HCT116 (cell line): ENCODE measurements at regions of chr11 and their contacts with region 1.

Region 1: GRCh38 chr11:72040726-72041441 is 39.5 kb downstream of the NUMA1 start:
- DNase-seq: peak; percentile 72
- ATAC-seq: peak; percentile 67
- H3K4me3 ChIP-seq: peak overlapping the region; percentile 57 to 63
- H3K27ac ChIP-seq: peak overlapping the region; percentile 83
- H3K4me1 ChIP-seq: peaks cover 24 to 53% of the 10 kb centered on the region in 2 experiments
- H3K27me3 ChIP-seq: no peaks in the 10 kb centered on the region
- CTCF ChIP-seq: no peak; a peak in 1 of 6 replicates
- POLR2A ChIP-seq: no peak
- RAD21 ChIP-seq: no peak

Region 2: GRCh38 chr11:72072348-72072747 is 31.5 kb after region 1 on chr11:
- CTCF ChIA-PET with region 1: no interaction called
- POLR2A ChIA-PET with region 1: no interaction called
- RAD21 ChIA-PET with region 1: no interaction called
- intact Hi-C with region 1: loop called (anchors 5 kb)
- DNase-seq: peak; percentile 59
- ATAC-seq: peak; percentile 77
- H3K4me3 ChIP-seq: peak overlapping the region; percentile 13 to 36
- H3K27ac ChIP-seq: peak overlapping the region; percentile 76
- H3K4me1 ChIP-seq: peaks cover 48 to 65% of the 10 kb centered on the region in 2 experiments
- H3K27me3 ChIP-seq: no peaks in the 10 kb centered on the region
- CTCF ChIP-seq: no peak
- POLR2A ChIP-seq: no peak
- RAD21 ChIP-seq: 0 out of 2 replicates have a peak, but pooled peaks have one; percentile 13